Common myeloid progenitor, CD34-positive (primary cell): ENCODE measurements at regions of chr2 and their contacts with region 1.

Region 1: GRCh38 chr2:230160112-230160660 is 59.6 kb downstream of the SP110 start:
- DNase-seq: peak; percentile 68 to 81 (median 72)
- H3K4me3 ChIP-seq: no peak overlapping the region
- H3K27ac ChIP-seq: no peak overlapping the region
- H3K4me1 ChIP-seq: peaks cover 0 to 27% (median 25%) of the 10 kb centered on the region in 4 experiments
- H3K27me3 ChIP-seq: peaks cover 0 to 3% (median 0%) of the 10 kb centered on the region in 5 experiments

Region 2: DNA sequence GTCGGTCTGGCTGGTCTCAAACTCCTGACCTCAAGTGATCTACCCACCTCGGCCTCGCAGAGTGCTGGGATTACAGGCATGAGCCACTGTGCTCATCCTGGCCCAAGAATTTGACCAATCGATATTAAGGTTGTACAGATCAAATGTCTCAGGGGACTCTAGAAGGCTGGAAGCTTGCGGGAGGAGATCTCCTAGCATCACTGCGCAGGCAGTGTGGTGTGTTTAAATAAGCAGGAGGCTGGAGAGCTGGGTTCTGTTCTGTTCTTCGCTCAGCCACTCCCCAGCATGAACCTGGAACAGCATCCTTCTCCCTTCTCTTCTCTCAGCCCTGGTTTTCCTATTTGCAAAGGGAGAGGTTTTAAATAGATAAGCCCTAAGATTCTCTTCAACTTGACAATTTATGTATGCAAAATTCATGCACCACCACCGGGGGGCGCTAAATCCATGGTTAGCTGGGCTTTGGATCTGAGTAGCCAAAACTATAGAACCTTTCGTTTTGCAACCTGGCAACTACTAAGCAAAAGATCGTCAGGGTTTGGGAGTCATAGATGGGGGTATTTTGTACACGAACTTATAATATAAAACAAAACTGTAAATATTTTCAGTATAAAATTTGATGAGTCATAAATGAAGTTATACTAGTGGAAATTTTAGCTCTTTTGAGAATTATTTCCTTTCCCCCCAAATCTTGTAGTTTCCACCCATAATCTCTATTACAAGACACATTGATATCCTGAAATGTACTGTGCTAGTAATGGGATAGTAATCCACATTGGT is 152.1 kb before region 1 on chr2:
- CTCF ChIA-PET with region 1: interaction called, 90 read pairs
- POLR2A ChIA-PET with region 1: no interaction called
- DNase-seq: peak; percentile 79 to 90 (median 84)
- H3K4me3 ChIP-seq: peak overlapping the region in 1 of 7 experiments; percentile 39
- H3K27ac ChIP-seq: peak overlapping the region in 1 of 2 experiments; percentile 1
- H3K4me1 ChIP-seq: peaks cover 0 to 8% (median 3%) of the 10 kb centered on the region in 4 experiments
- H3K27me3 ChIP-seq: no peaks in the 10 kb centered on the region

Region 3: GRCh38 chr2:230053753-230054478 is 106.3 kb before region 1 on chr2:
- CTCF ChIA-PET with region 1: interaction called, 13 read pairs
- POLR2A ChIA-PET with region 1: no interaction called
- DNase-seq: peak; percentile 50 to 91 (median 89)
- H3K4me3 ChIP-seq: peak overlapping the region in 1 of 7 experiments; percentile 38
- H3K27ac ChIP-seq: no peak overlapping the region
- H3K4me1 ChIP-seq: peaks cover 0 to 22% (median 14%) of the 10 kb centered on the region in 4 experiments
- H3K27me3 ChIP-seq: no peaks in the 10 kb centered on the region

Region 4: GRCh38 chr2:230075988-230076631 is 84.1 kb before region 1 on chr2:
- CTCF ChIA-PET with region 1: interaction called, 97 read pairs
- POLR2A ChIA-PET with region 1: no interaction called
- DNase-seq: no peak
- H3K4me3 ChIP-seq: no peak overlapping the region
- H3K27ac ChIP-seq: no peak overlapping the region
- H3K4me1 ChIP-seq: peaks cover 0 to 8% (median 0%) of the 10 kb centered on the region in 4 experiments
- H3K27me3 ChIP-seq: no peaks in the 10 kb centered on the region

Region 5: GRCh38 chr2:230134496-230135129 is 25.6 kb before region 1 on chr2:
- CTCF ChIA-PET with region 1: interaction called, 30 read pairs
- POLR2A ChIA-PET with region 1: no interaction called
- DNase-seq: peak; percentile 89 to 98 (median 96)
- H3K4me3 ChIP-seq: no peak overlapping the region
- H3K27ac ChIP-seq: peak overlapping the region; percentile 10 to 72
- H3K4me1 ChIP-seq: peaks cover 13 to 32% (median 23%) of the 10 kb centered on the region in 4 experiments
- H3K27me3 ChIP-seq: no peaks in the 10 kb centered on the region

Region 6: DNA sequence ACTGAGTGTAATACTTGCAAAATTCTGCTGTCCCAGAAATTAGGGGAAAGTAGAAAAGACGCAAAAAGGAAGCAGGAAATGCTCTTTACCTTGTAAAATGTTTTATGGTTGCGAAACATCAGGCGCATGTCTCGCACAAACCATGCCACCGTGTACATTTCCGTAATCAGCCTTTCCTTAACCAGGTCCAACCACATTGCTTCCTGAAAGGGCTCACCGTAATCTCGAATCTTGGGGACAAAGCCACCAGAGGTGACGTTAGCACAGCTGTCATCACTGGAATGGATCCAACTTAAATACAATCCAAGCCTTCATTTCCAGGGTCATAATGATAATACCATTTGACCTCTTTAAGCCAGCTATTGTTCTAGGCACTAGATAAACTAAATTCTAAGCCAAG is 10.3 kb after region 1 on chr2:
- CTCF ChIA-PET with region 1: interaction called, 50 read pairs
- POLR2A ChIA-PET with region 1: no interaction called
- DNase-seq: peak; percentile 82 to 91 (median 90)
- H3K4me3 ChIP-seq: peak overlapping the region in 1 of 7 experiments; percentile 39
- H3K27ac ChIP-seq: no peak overlapping the region
- H3K4me1 ChIP-seq: peaks cover 6 to 13% (median 8%) of the 10 kb centered on the region in 4 experiments
- H3K27me3 ChIP-seq: no peaks in the 10 kb centered on the region